ENCODE measurements at regions of chr2 and their contacts with region 1.

Region 1: GRCh38 chr2:71510196-71510807 is 56.9 kb downstream of the DYSF start:
- DNase-seq: peak; percentile 84
- CTCF ChIP-seq: peak; percentile 82

Region 2: GRCh38 chr2:71157124-71157793 is 353.0 kb before region 1 on chr2:
- CTCF ChIA-PET with region 1: interaction called, 11 read pairs
- POLR2A ChIA-PET with region 1: no interaction called
- DNase-seq: peak; percentile 63
- CTCF ChIP-seq: peak; percentile 63

Region 3: GRCh38 chr2:71226965-71227560 is 283.2 kb before region 1 on chr2 and contains the start of gene PAIP2B:
- CTCF ChIA-PET with region 1: interaction called, 20 read pairs
- POLR2A ChIA-PET with region 1: no interaction called
- DNase-seq: peak; percentile 91
- CTCF ChIP-seq: no peak

Region 4: DNA sequence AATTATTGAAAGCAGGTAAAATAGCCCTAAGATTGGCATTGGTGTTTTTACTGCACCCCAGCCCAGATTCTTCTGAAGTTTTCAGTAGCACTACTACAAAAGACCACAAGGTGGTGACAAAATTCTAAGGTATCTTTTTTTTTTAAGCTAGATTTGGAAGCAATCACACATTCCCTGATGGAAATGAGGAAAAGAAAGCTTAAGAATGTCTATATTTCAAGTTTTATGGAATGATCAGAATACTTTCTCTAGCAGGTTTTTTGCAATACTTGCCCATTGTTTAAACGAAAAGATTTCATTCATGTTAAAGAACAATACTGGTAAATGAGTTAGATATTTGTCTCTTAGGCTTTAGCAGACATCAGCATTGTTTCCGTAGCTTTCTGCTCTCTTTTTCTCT is 210.8 kb before region 1 on chr2:
- CTCF ChIA-PET with region 1: interaction called, 267 read pairs
- POLR2A ChIA-PET with region 1: interaction called, 4 read pairs
- DNase-seq: peak; percentile 43
- CTCF ChIP-seq: peak; percentile 60

Region 5: GRCh38 chr2:71453404-71454220 is 56.7 kb before region 1 on chr2 and contains the start of gene DYSF:
- CTCF ChIA-PET with region 1: interaction called, 11 read pairs
- POLR2A ChIA-PET with region 1: no interaction called
- DNase-seq: no peak
- CTCF ChIP-seq: no peak

Region 6: GRCh38 chr2:71460595-71461303 is 49.6 kb before region 1 on chr2:
- CTCF ChIA-PET with region 1: interaction called, 17 read pairs
- POLR2A ChIA-PET with region 1: no interaction called
- DNase-seq: no peak
- CTCF ChIP-seq: no peak

Region 7: GRCh38 chr2:71498261-71498701 is 12.0 kb before region 1 on chr2:
- CTCF ChIA-PET with region 1: interaction called, 27 read pairs
- POLR2A ChIA-PET with region 1: no interaction called
- DNase-seq: no peak
- CTCF ChIP-seq: no peak